Mammary epithelial cell (primary cell): ENCODE measurements at regions of chr12 and their contacts with region 1.

Region 1: GRCh38 chr12:1583421-1584078 is 10.8 kb downstream of the FBXL14 start:
- DNase-seq: peak; percentile 70
- H3K4me3 ChIP-seq: no peak overlapping the region
- H3K27ac ChIP-seq: no peak overlapping the region
- H3K4me1 ChIP-seq: peaks cover 7% of the 10 kb centered on the region
- H3K27me3 ChIP-seq: no peaks in the 10 kb centered on the region
- CTCF ChIP-seq: peak; percentile 80 to 88

Region 2: DNA sequence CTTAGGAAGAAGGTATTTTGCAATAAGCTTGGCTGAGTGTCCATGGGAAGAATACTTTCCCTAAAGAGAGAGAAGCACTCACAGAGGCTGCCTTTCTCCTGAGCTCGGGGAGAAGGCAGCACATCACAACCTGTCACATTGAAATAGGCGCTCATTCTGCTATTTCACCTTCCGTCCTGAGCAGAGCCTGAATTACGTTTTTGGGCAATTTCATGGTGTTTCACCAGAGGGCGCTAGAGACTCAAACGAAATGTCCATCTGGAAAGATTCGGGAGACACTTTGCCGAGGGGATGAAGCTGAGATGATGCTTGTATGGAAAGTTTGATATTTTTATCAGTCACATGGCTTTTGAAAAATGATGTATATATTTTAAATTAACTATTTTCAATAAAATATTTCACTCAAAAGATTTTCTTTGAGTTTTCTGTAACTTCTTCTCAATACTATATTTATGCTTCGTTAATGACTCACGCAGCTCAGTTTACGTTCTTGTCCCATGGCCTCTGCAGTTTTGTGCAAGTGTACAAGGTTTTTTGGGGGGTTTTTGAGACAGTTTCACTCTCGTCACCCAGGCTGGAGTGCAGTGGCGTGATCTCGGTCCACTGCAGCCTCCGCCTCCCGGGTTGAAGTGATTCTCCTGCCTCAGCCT is 1141.2 kb before region 1 on chr12:
- CTCF ChIA-PET with region 1: interaction called, 13 read pairs
- dilution Hi-C with region 1: no loop called
- in situ Hi-C with region 1: no loop called
- intact Hi-C with region 1: no loop called
- DNase-seq: peak; percentile 32
- H3K4me3 ChIP-seq: no peak overlapping the region
- H3K27ac ChIP-seq: no peak overlapping the region
- H3K4me1 ChIP-seq: no peaks in the 10 kb centered on the region
- H3K27me3 ChIP-seq: no peaks in the 10 kb centered on the region
- CTCF ChIP-seq: peak; percentile 69 to 87

Region 3: DNA sequence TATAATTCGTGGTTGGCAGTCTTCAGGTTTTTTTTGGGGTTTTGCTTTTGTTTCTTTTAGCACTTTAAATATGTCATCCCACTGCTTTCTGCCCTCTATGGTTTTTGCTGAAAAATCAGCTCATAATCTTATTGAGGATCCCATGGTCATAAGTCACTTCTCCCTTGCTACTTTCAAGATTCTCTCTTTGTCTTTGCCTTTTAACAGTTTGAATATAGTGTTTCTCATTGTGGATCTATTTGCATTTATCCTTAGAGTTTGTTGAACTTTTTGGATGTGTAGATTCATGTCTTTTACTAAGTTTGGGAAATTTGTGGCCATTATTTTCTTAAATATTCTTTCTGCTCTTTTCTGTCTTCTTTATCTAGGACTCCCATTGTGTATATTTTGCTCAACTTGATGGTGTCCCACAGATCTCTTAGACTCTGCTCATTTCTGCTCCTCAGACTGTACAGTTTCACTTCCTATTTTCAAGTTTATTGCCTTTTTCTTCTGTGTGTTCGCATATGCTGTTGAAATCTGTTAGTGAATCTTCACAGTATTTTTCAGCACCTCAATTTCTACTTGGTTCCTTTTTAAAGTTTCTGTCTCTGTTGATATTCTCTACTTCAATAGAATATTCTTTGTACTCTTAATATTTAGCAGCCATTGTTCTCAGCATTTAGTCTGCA is 760.4 kb before region 1 on chr12:
- CTCF ChIA-PET with region 1: no interaction called
- dilution Hi-C with region 1: no loop called
- in situ Hi-C with region 1: loop called in 1 of 2 experiments (anchors 25 kb)
- intact Hi-C with region 1: loop called (anchors 5 kb)
- DNase-seq: no peak
- H3K4me3 ChIP-seq: no peak overlapping the region
- H3K27ac ChIP-seq: no peak overlapping the region
- H3K4me1 ChIP-seq: no peaks in the 10 kb centered on the region
- H3K27me3 ChIP-seq: no peaks in the 10 kb centered on the region
- CTCF ChIP-seq: no peak

Region 4: GRCh38 chr12:1117970-1118563 is 465.5 kb before region 1 on chr12:
- CTCF ChIA-PET with region 1: interaction called, 30 read pairs
- dilution Hi-C with region 1: no loop called
- in situ Hi-C with region 1: loop called (anchors 5 to 10 kb)
- intact Hi-C with region 1: loop called (anchors 1 kb)
- DNase-seq: peak; percentile 53
- H3K4me3 ChIP-seq: no peak overlapping the region
- H3K27ac ChIP-seq: no peak overlapping the region
- H3K4me1 ChIP-seq: peaks cover 33% of the 10 kb centered on the region
- H3K27me3 ChIP-seq: no peaks in the 10 kb centered on the region
- CTCF ChIP-seq: peak; percentile 79 to 88

Region 5: DNA sequence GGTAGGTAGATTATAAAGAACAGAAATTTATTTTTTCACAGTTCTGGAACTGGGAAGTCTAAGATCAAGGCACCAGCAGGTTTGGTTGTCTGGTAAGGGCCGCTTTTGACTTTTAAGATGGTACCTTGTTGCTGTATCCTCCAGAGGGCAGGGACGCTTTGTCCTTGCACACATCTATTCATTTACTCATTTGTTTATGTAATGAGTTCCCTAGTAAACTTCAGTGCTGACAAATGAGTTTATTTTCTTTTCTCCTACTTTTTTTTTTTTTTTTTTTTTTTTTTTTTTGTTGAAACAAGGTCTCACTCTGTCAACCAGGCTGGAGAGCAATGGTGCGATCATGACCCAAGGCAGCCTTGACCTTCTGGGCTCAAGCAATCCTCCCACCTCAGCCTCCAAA is 184.9 kb before region 1 on chr12:
- CTCF ChIA-PET with region 1: no interaction called
- dilution Hi-C with region 1: no loop called
- in situ Hi-C with region 1: no loop called
- intact Hi-C with region 1: loop called (anchors 5 kb)
- DNase-seq: no peak
- H3K4me3 ChIP-seq: no peak overlapping the region
- H3K27ac ChIP-seq: no peak overlapping the region
- H3K4me1 ChIP-seq: no peaks in the 10 kb centered on the region
- H3K27me3 ChIP-seq: no peaks in the 10 kb centered on the region
- CTCF ChIP-seq: peak in 1 of 2 donors; percentile 26

Region 6: DNA sequence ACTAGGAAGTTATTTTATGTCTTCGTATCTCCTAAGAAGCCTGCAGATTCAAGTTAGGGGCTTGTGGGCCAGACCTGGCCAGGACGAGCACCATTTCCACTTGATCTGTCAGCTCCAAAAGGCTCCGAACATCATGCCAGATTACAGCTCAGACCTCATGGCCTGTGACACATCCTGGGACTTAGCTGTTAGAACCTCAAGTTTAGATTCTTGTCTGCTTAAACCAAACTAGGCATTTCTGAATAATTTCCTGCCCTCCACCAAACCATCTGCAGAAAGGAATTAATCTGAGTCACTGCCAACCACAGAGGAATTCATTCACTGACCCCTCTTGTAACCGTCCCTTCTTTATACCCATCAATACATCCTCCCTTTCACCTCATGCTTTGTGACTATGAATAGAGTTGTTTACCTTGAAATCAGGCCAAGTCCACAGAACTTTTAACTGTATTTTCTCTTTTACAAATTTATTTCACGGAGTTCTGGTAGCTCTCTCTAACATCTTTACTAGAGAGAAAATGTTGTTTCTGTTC is 109.4 kb before region 1 on chr12:
- CTCF ChIA-PET with region 1: no interaction called
- dilution Hi-C with region 1: no loop called
- in situ Hi-C with region 1: no loop called
- intact Hi-C with region 1: loop called (anchors 5 kb)
- DNase-seq: peak; percentile 93
- H3K4me3 ChIP-seq: peak overlapping the region in 2 of 3 experiments; percentile 17 to 28
- H3K27ac ChIP-seq: peak overlapping the region; percentile 92
- H3K4me1 ChIP-seq: peaks cover 29% of the 10 kb centered on the region
- H3K27me3 ChIP-seq: no peaks in the 10 kb centered on the region
- CTCF ChIP-seq: no peak